Activated T-helper 1 cell treated with anti-CD3 and anti-CD28 coated beads, Interleukin-12 subunit alpha, Interleukin-12 subunit beta, Interleukin-2, Interleukin-4 antibody, amounts not matched to agents 30 ng/mL and 10 ng/mL and 1 ng/mL, durations not matched to agents 14 hours and 24 hours and 36 hours (primary cell): ENCODE measurements at regions of chr19 and their contacts with region 1.

Region 1: DNA sequence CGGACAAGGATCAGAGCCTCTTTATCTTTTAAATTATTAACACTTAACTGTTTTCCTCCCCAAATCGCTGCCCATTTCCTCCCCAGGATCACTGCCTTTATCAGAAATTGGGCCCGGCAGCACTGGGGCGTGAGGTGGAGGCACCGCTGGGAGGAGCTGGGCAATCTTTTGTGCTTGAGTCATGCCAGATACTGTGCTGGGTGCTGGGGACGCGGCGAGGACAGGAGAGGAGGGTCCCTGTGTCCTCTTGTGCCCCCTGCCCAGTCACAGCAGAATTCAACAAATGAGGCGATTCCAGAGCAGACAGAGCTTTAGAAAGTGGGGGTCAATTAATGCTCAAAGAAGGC is 347.8 kb downstream of the ZNF536 start:
- DNase-seq: no peak
- H3K4me3 Mint-ChIP-seq: peak overlapping the region; percentile 53
- H3K27ac Mint-ChIP-seq: no peak overlapping the region
- H3K4me1 Mint-ChIP-seq: no peaks in the 10 kb centered on the region
- H3K27me3 Mint-ChIP-seq: peaks cover 13% of the 10 kb centered on the region

Region 2: DNA sequence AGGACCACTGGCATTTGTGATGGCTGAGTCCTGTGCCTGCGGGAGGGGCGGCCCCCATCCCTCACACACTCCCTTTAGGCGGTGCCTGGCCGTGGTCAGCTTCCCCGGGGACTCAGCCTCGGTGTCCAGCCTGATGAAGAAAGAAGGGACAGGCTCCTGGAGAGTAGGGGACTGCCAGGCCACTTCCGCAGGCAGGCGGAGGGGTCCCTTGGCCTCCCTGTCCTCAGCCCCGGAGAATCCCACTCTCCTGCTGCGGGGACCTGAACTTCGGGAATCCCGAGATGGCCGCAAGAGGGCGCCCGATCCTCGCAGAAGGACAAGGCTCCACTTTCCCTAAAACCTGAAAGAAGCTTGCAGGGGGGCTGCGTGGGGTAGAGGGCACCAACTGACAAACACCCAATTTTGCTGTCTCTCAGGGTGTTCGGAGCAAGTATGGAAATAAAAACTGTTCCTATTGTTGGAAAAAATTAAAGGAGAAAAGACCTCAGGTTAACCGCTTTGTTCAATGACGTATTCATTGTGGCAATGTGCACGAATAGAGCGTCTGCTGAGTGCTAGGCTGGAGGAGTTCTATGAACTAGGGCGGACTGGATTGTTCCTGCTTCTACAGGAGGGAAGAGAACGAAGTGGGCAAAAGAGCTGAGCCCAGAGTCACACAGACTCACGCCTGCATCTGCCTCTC is 50.5 kb before region 1 on chr19:
- intact Hi-C with region 1: loop called (anchors 2 kb)
- DNase-seq: peak; percentile 8
- H3K4me3 Mint-ChIP-seq: no peak overlapping the region
- H3K27ac Mint-ChIP-seq: no peak overlapping the region
- H3K4me1 Mint-ChIP-seq: no peaks in the 10 kb centered on the region
- H3K27me3 Mint-ChIP-seq: no peaks in the 10 kb centered on the region

Region 3: GRCh38 chr19:30686176-30686820 is 33.7 kb before region 1 on chr19:
- intact Hi-C with region 1: no loop called
- DNase-seq: no peak
- H3K4me3 Mint-ChIP-seq: no peak overlapping the region
- H3K27ac Mint-ChIP-seq: no peak overlapping the region
- H3K4me1 Mint-ChIP-seq: no peaks in the 10 kb centered on the region
- H3K27me3 Mint-ChIP-seq: peaks cover 25% of the 10 kb centered on the region

Region 4: GRCh38 chr19:30757837-30758617 is 38.1 kb after region 1 on chr19:
- intact Hi-C with region 1: no loop called
- DNase-seq: no peak
- H3K4me3 Mint-ChIP-seq: no peak overlapping the region
- H3K27ac Mint-ChIP-seq: no peak overlapping the region
- H3K4me1 Mint-ChIP-seq: no peaks in the 10 kb centered on the region
- H3K27me3 Mint-ChIP-seq: peaks cover 2% of the 10 kb centered on the region